ENCODE measurements at regions of chr11 and their contacts with region 1.

Region 1: DNA sequence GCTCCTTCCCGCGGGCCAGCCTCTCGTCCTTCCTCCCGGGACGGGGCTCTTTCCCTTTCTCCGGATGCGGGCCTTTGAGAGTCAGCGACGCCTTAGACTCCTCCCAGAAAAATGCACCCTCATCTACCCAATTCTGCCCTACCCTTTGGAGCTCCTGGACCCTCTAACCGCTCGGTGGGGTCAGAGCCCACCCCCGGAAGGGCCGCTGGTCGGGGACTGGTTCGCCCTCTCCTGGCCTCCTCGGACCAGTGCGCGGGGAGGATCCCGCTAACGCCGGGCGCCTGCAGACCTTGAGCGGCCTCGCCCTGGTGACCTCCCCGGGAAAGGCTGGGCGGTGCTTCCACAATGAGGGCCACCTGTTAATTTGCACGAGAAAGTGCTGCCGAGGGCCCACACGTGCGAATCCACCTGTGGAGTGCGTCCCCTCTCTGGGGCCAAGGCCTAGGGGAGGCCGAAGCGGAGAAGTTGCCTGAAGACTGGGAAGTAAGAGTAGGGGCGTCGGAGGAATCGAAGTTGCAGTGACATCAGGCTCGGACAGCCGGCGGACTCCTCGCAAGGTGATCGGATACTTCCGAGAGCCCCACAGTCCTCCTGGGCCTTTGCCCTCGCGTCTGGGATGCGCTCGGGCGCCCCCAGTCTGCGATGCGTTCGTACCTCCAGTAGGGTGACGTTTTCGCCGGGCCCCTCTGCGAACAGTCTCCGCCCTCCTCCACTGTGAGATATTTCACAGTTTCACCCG is 61.5 kb downstream of the ENDOD1 start:
- DNase-seq: peak; percentile 93
- ATAC-seq: peak; percentile 97

Region 2: DNA sequence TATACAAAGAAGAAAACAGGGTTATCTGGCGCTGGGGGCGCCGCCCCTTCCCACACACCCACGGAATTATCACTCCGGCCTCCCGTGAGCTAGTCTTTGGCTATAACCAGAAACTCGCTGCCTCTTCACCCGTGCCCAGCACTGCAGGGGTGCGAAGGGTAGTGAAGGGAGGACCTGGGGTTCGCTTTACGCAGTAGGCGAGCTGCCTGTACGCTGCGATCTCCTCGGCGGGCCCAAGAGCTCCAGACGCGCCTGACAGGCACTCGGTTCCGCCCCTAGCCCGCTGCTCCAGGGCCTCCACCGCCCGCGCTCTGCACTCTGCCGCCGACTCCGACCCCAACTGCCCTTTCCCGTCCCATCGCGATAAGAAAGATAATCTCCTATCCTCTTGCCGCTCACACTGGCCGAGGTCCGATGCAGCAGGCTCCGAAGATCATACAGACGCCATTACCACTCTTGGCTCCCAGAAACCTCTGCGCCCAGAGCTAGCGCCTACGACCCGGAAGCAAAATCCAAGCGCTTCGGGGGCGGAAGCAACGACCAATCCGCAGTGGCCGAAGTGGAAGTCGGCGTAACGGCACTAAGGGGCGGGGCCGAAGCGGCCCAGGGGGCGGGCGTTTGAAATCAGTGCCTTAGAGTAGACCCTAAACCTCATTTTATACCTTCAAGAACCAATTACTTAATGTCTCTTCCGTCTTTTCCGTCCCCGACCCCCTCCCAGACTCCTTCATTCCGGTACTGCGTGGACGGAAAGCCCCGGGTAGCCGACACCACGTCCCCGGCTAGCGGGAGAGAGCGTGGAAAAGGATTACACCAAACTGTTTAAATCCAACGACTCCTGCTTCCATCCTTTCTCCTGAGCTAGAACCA is 177.8 kb before region 1 on chr11 and contains the starts of genes CWC15 and KDM4D:
- intact Hi-C with region 1: loop called (anchors 5 kb)
- DNase-seq: peak; percentile 97
- ATAC-seq: peak; percentile 100
- total RNA-seq, gene CWC15: 79.1 TPM
- total RNA-seq, gene KDM4D: 0.54 TPM

Region 3: GRCh38 chr11:95089620-95090542 is 61.2 kb before region 1 on chr11 and contains the start of gene ENDOD1:
- intact Hi-C with region 1: loop called (anchors 2 kb)
- DNase-seq: peak; percentile 93
- ATAC-seq: peak; percentile 98
- total RNA-seq, gene ENDOD1: 11.2 TPM

Region 4: DNA sequence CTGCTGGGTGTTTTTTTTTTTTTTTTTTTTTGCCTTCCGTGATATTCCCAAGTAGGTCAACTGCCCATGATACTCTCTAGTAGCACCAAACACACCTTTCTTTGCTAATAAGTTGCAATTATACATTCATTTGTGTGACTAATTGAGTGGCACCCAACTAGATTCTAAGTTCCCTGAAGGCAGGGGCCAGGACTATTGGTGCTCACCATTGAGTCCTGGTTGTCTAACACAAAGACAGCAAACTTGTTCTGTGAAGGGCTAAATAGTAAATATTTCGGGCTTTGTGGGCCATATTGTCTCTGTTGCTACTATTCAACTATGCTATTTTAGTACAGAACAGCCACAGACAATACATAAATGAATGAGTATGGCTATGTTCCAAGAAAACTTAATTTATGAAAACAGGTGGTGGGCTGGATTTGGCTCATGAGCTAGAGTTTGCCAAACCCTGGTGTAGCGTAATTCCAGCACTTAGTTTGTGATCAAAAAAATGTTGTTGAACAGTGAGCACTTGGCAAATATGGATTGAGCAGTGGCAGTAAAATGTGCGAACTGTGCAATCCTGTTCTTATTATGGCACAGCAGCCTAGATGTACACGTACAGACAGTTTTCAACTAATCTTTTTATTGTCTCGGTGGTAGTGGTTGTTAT is 50.1 kb before region 1 on chr11:
- intact Hi-C with region 1: no loop called
- DNase-seq: no peak
- ATAC-seq: no peak

Region 5: DNA sequence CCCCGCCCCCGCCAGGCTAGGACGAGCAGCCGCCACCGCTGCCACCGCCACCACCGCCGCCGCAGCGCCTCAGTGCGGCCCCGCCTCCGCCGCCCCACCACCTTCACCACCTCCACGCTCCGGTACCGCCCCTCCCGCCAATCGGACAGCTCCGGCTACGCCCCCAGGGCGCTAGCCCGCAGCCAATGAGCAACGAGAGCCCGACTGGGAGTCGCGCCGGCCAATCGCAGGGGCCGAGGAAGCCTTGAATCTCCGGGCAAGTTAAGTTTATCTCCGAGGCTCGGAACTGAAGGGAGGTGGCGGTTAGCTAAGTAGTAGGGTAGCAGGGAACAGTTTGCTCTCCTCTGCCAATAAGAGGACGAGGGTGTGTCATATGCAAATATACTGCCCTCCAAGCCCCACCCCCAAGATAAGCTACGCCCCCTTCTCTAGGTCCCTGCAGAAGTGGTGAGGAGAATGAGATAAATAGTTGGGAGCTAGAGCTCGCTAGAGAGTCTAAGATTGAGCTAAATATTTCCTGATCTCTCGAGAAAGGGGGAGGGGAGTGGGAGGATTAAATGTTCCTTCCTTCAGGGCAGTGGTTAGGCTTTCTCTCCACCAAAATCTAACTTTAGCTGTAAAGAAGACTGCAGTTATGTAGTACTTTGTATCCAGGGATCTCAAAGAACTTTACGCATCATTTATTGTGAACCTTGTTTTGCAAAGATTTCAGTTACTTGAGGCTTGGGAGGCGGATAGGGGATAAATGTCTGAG is 80.2 kb after region 1 on chr11 and contains the start of gene SESN3:
- intact Hi-C with region 1: loop called (anchors 5 kb)
- DNase-seq: peak; percentile 99
- ATAC-seq: peak; percentile 98
- total RNA-seq, gene SESN3: 6.0 TPM

Region 6: DNA sequence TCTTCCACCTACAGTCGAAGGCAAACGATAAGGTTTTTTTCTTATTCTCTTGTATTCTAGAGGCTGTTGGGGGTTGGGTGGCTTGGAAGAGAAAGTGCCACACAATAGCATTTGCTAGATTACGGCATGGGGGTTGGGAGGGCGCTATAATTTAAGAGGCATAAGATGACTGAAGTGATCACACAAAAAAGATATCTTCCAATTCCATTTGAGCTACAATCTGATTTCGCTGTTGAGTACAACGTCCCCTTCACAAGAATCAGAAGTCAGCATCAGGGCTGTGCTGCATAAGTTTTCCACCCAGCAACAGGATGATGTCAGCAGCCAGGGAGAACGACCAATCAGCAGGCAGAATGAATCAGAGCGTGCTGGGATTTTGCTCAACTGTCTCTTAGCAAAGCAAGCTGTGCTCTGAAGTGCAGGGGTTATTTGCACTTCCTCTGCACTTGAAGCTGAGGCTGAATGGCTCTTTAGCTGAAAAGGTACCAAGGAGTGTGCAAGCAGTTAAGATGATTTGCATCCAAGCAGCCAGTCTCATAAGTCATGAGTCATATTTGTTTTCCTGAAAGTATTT is 103.1 kb after region 1 on chr11:
- intact Hi-C with region 1: no loop called
- DNase-seq: peak; percentile 82
- ATAC-seq: peak; percentile 94

Region 7: GRCh38 chr11:95764267-95764898 is 613.3 kb after region 1 on chr11:
- intact Hi-C with region 1: loop called (anchors 2 kb)
- DNase-seq: no peak
- ATAC-seq: no peak